Activated CD4-positive, alpha-beta memory T cell treated with anti-CD3 and anti-CD28 coated beads for 36 hours (primary cell): ENCODE measurements at regions of chr2 and their contacts with region 1.

Region 1: GRCh38 chr2:57906152-57906732 is 140.4 kb upstream of the VRK2 start:
- DNase-seq: no peak
- H3K4me3 Mint-ChIP-seq: no peak overlapping the region
- H3K27ac Mint-ChIP-seq: no peak overlapping the region
- H3K4me1 Mint-ChIP-seq: peaks cover 22% of the 10 kb centered on the region
- H3K27me3 Mint-ChIP-seq: no peaks in the 10 kb centered on the region

Region 2: GRCh38 chr2:58680755-58681310 is 774.6 kb after region 1 on chr2:
- CTCF ChIA-PET with region 1: no interaction called
- POLR2A ChIA-PET with region 1: no interaction called
- intact Hi-C with region 1: loop called (anchors 10 kb)
- DNase-seq: no peak
- H3K4me3 Mint-ChIP-seq: no peak overlapping the region
- H3K27ac Mint-ChIP-seq: no peak overlapping the region
- H3K4me1 Mint-ChIP-seq: no peaks in the 10 kb centered on the region
- H3K27me3 Mint-ChIP-seq: no peaks in the 10 kb centered on the region